ENCODE measurements at regions of chr3 and their contacts with region 1.

Region 1: GRCh38 chr3:197394464-197395321 is 96.3 kb upstream of the DLG1 start:
- DNase-seq: peak; percentile 96
- ATAC-seq: peak; percentile 94
- H3K4me3 ChIP-seq: peak overlapping the region; percentile 44; the same call in 1 of the 2 replicates
- H3K27ac ChIP-seq: peak overlapping the region; percentile 89
- H3K4me1 ChIP-seq: peaks cover 30% of the 10 kb centered on the region
- H3K27me3 ChIP-seq: no peaks in the 10 kb centered on the region
- CTCF ChIP-seq: no peak
- EP300 ChIP-seq: peak; percentile 99 to 100
- POLR2A ChIP-seq: peak; percentile 69; the same call in 1 of the 2 replicates
- RAD21 ChIP-seq: peak; percentile 21; the same call in 1 of the 2 replicates

Region 2: GRCh38 chr3:197298341-197298857 is 96.3 kb before region 1 on chr3 and contains the start of gene DLG1:
- CTCF ChIA-PET with region 1: no interaction called
- POLR2A ChIA-PET with region 1: interaction called, 5 read pairs
- RAD21 ChIA-PET with region 1: interaction called, 8 read pairs
- SMC1A ChIA-PET with region 1: interaction called, 7 read pairs
- in situ Hi-C with region 1: no loop called
- intact Hi-C with region 1: loop called (anchors 2 kb)
- DNase-seq: peak; percentile 53
- ATAC-seq: peak; percentile 84
- H3K4me3 ChIP-seq: peak within 1 kb of the TSS; percentile 97
- H3K27ac ChIP-seq: peak within 1 kb of the TSS; percentile 87
- H3K4me1 ChIP-seq: no peaks in the 10 kb centered on the region; the same call in 1 of the 2 replicates
- H3K27me3 ChIP-seq: no peaks in the 10 kb centered on the region; a peak in 3 of 4 replicates
- CTCF ChIP-seq: no peak
- EP300 ChIP-seq: no peak
- POLR2A ChIP-seq: peak; percentile 85
- RAD21 ChIP-seq: no peak
- polyA plus RNA-seq, gene DLG1: 9.2 to 10.0 TPM

Region 3: GRCh38 chr3:197305854-197306253 is 88.8 kb before region 1 on chr3:
- CTCF ChIA-PET with region 1: no interaction called
- POLR2A ChIA-PET with region 1: interaction called, 11 read pairs
- RAD21 ChIA-PET with region 1: interaction called, 4 read pairs
- SMC1A ChIA-PET with region 1: interaction called, 3 read pairs
- in situ Hi-C with region 1: no loop called
- intact Hi-C with region 1: loop called (anchors 2 kb)
- DNase-seq: peak; percentile 75
- ATAC-seq: peak; percentile 96
- H3K4me3 ChIP-seq: no peak overlapping the region
- H3K27ac ChIP-seq: no peak overlapping the region
- H3K4me1 ChIP-seq: peaks cover 19% of the 10 kb centered on the region
- H3K27me3 ChIP-seq: no peaks in the 10 kb centered on the region; a peak in 2 of 4 replicates
- CTCF ChIP-seq: no peak
- EP300 ChIP-seq: peak; percentile 76 to 91; a peak in 2 of 4 replicates
- POLR2A ChIP-seq: no peak
- RAD21 ChIP-seq: 0 out of 2 replicates have a peak, but pooled peaks have one; percentile 8

Region 4: DNA sequence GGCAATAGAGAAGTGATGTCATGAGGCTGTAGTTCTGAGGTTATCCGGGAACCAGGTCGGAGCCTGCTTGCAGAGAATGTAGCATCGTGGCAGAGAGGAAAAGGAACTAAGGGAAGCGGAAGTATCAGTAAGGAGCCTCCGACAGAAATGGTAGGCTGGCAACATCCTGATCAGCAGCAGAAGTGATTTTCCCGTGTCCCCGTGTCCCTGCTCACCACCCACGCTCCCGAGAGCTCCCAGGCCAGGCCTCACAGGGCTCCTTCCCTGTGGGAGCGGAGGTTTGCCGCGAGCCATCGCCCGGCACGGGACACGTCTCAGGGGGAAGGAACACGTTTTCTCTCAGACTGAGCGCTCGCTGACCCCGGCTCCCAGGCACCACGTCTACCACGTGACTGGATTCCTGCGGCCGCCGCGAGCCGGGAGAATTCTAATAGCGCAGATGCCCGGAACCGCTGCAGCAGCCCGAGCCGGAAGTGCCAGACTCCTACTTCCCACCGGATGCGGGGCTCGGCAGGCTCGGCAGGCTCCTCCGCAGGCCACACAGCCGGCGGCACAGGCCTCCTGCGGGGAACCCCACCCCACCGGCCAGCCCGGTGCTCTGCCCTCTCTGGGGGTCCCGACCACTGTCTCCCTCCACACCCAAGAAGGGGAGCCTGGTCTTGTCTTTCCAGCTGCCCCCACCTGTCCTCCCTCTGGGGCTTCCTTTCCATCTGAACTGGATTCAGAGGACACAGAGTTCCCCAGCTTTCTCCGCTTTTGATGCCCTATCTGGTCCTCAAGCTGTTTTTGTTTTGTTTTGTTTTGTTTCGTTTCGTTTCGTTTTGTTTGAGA is 61.8 kb after region 1 on chr3:
- CTCF ChIA-PET with region 1: interaction called, 16 read pairs
- POLR2A ChIA-PET with region 1: no interaction called
- RAD21 ChIA-PET with region 1: interaction called, 6 read pairs
- SMC1A ChIA-PET with region 1: interaction called, 11 read pairs
- in situ Hi-C with region 1: no loop called
- intact Hi-C with region 1: loop called (anchors 2 kb)
- DNase-seq: no peak
- ATAC-seq: peak; percentile 85
- H3K4me3 ChIP-seq: peak overlapping the region; percentile 82
- H3K27ac ChIP-seq: peak overlapping the region; percentile 58
- H3K4me1 ChIP-seq: no peaks in the 10 kb centered on the region
- H3K27me3 ChIP-seq: no peaks in the 10 kb centered on the region
- CTCF ChIP-seq: no peak
- EP300 ChIP-seq: no peak
- POLR2A ChIP-seq: peak; percentile 79
- RAD21 ChIP-seq: no peak

Region 5: DNA sequence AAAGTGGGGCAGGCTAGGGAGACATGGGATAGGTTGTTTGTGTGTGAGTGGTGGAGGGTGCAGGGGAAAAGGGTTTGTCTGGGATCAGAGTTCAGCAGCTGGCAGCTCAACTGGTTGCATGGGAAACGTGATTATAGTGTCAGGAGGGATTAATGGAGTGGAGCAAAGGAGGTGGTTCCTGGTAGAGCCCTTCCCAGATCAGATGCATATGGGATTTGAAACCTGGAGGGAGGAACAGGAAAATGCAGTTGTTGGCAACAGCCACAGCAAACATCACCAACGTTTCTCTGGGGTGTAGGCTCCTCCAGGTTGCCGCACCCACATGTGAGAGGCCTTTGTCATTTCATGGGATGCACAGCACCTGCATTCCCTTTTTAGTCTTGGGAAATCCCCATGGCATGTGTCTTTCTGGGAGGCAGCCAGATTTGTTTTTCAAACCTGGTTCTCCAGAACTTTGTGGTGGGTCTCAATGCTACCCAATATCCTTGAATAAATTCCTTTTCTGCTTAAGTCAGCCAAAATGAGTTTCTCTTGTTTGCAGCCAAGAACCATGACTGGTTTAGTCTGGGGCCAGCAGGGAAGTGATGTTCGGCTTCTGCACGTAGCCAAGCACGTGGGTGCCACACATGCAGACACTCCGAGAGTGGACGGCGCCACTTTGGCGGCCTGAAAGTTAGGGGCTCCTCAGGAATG is 99.8 kb after region 1 on chr3:
- CTCF ChIA-PET with region 1: no interaction called
- POLR2A ChIA-PET with region 1: no interaction called
- RAD21 ChIA-PET with region 1: interaction called, 10 read pairs
- SMC1A ChIA-PET with region 1: interaction called, 9 read pairs
- in situ Hi-C with region 1: no loop called
- intact Hi-C with region 1: loop called (anchors 1 kb)
- DNase-seq: no peak
- ATAC-seq: no peak
- H3K4me3 ChIP-seq: no peak overlapping the region
- H3K27ac ChIP-seq: peak overlapping the region; percentile 49
- H3K4me1 ChIP-seq: peaks cover 30% of the 10 kb centered on the region
- H3K27me3 ChIP-seq: no peaks in the 10 kb centered on the region; a peak in 1 of 4 replicates
- CTCF ChIP-seq: no peak
- EP300 ChIP-seq: no peak
- POLR2A ChIP-seq: no peak
- RAD21 ChIP-seq: no peak